ENCODE measurements at regions of chr10 and their contacts with region 1.

Region 1: GRCh38 chr10:117174439-117175214 is 22.7 kb upstream of the KCNK18 start:
- DNase-seq: no peak
- H3K4me3 ChIP-seq: peak overlapping the region; percentile 44
- CTCF ChIP-seq: peak; percentile 77

Region 2: DNA sequence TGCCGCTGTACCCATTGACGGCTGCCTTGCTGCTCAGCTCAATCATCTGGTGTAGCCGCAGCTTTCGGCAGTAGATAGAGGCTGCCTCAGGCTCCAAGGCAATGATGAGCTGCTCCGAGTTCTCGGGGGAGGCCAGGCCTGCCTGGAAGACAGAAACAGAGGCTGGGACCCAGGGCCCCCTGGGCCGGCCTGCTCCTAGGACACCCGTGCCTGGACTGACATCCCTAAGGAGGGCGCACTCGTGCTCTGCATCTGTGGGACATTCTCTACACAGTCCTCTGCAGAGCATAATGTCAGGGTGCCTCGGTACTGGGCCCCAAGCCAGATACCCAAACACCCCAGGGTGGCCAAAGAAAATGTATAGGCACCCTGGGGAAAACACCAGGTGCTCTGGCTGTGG is 490.8 kb before region 1 on chr10:
- CTCF ChIA-PET with region 1: interaction called, 26 read pairs
- POLR2A ChIA-PET with region 1: no interaction called
- DNase-seq: no peak
- H3K4me3 ChIP-seq: no peak overlapping the region
- CTCF ChIP-seq: no peak

Region 3: GRCh38 chr10:116796910-116797513 is 377.6 kb before region 1 on chr10:
- CTCF ChIA-PET with region 1: interaction called, 809 read pairs
- POLR2A ChIA-PET with region 1: no interaction called
- DNase-seq: no peak
- H3K4me3 ChIP-seq: no peak overlapping the region
- CTCF ChIP-seq: peak; percentile 87

Region 4: GRCh38 chr10:116836902-116837523 is 337.6 kb before region 1 on chr10:
- CTCF ChIA-PET with region 1: interaction called, 70 read pairs
- POLR2A ChIA-PET with region 1: interaction called, 3 read pairs
- DNase-seq: no peak
- H3K4me3 ChIP-seq: no peak overlapping the region
- CTCF ChIP-seq: peak; percentile 45

Region 5: GRCh38 chr10:117186832-117187615 is 12.4 kb after region 1 on chr10:
- CTCF ChIA-PET with region 1: interaction called, 27 read pairs
- POLR2A ChIA-PET with region 1: no interaction called
- DNase-seq: no peak
- H3K4me3 ChIP-seq: no peak overlapping the region
- CTCF ChIP-seq: no peak

Measured in AG04449 (cell line).